ENCODE measurements at regions of chr16 and their contacts with region 1.

Region 1: DNA sequence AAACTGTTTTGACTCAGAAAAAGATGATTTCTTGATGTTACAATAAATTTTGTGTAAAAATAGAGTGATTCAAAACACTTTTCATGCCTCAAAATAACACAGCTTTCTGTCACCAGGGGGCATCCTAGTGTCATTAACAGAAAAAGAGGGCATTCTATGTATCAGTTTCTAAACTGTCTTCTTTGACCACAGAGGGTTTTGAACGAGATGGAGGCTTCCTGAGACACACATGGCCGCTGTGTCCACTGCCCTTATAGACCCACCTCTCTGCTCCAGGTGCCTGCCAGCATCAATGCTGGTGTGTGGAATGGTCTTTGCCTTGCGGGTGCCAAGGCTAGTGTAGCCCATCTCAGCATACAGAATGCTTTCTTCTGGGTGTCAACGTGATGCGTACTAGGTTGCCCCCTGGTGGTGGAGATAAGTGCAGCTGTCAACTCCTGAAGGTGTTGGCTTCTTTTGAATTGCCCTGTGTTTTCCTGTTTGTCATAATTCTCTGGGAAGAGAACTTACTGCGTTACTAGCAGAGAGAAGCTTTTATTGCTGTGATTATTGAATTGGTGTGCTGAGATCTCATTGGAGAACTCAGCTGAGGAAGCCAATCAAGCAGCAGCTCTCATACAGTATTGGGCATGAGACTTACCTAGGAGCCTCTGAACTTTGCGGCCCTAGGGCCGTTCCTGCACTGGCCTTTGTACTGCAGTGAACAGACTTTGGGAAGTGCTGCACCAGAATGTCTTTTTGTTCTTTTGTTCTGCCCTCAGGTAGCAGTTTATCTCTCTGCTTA is 38.6 kb downstream of the USP10 start:
- DNase-seq: peak; percentile 86
- H3K4me3 Mint-ChIP-seq: no peak overlapping the region
- H3K27ac Mint-ChIP-seq: peak overlapping the region; percentile 59
- H3K4me1 Mint-ChIP-seq: peaks cover 41% of the 10 kb centered on the region
- H3K27me3 Mint-ChIP-seq: no peaks in the 10 kb centered on the region
- CTCF ChIP-seq: peak; percentile 75

Region 2: GRCh38 chr16:84511180-84511824 is 227.1 kb before region 1 on chr16:
- CTCF ChIA-PET with region 1: interaction called, 23 read pairs
- POLR2A ChIA-PET with region 1: interaction called, 3 read pairs
- intact Hi-C with region 1: no loop called
- DNase-seq: peak; percentile 86
- H3K4me3 Mint-ChIP-seq: no peak overlapping the region
- H3K27ac Mint-ChIP-seq: no peak overlapping the region
- H3K4me1 Mint-ChIP-seq: no peaks in the 10 kb centered on the region
- H3K27me3 Mint-ChIP-seq: no peaks in the 10 kb centered on the region
- CTCF ChIP-seq: peak; percentile 87

Region 3: DNA sequence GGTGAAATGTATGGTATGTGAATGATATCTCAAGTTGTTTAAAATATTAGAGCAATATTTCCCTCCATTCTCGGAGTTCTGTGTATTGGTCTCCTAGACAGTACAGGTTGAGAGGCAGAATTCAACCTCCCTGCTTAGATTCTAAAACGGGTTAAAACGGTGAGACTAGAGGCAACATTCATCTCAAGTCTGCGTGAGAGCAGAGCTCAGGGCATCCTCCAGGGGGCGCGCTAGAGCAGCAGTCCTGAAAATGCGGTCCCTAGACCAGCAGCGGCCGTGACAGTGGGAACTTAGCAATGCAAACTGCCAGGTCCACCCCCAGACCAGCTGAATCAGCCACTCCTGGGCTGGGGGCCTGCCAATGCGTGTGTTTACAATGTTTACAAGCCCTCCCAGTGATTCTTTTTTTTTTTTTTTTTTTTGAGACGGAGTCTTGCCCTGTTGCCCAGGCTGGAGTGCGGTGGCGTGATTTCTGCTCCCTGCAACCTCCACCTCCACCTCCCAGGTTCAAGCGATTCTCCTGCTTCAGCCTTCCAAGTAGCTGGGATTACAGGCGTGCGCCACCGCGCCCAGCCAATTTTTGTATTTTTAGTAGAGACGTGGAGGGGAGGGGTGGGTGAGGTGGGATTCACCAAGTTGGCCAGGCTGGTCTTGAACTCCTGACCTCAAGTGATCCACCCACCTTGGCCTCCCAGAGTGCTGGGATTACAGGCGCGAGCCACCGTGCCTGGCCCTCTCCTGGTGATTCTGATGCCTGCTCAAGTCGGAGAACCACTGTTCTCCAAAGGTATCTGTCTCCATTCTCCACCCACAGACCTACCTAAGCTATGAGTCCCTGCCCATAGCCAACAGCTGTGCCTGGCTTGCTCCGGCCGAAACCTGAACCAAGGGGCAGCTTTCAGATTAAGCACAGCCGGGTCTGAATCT is 65.9 kb before region 1 on chr16:
- CTCF ChIA-PET with region 1: interaction called, 38 read pairs
- POLR2A ChIA-PET with region 1: interaction called, 5 read pairs
- intact Hi-C with region 1: loop called (anchors 1 kb)
- DNase-seq: peak; percentile 73
- H3K4me3 Mint-ChIP-seq: no peak overlapping the region
- H3K27ac Mint-ChIP-seq: no peak overlapping the region
- H3K4me1 Mint-ChIP-seq: peaks cover 17% of the 10 kb centered on the region
- H3K27me3 Mint-ChIP-seq: no peaks in the 10 kb centered on the region
- CTCF ChIP-seq: peak; percentile 89

Region 4: GRCh38 chr16:84699712-84700445 is 38.6 kb before region 1 on chr16 and contains the start of gene USP10:
- CTCF ChIA-PET with region 1: interaction called, 12 read pairs
- POLR2A ChIA-PET with region 1: interaction called, 66 read pairs
- intact Hi-C with region 1: no loop called
- DNase-seq: peak; percentile 79
- H3K4me3 Mint-ChIP-seq: peak within 1 kb of the TSS; percentile 87
- H3K27ac Mint-ChIP-seq: peak within 1 kb of the TSS; percentile 85
- H3K4me1 Mint-ChIP-seq: peaks cover 10% of the 10 kb centered on the region
- H3K27me3 Mint-ChIP-seq: no peaks in the 10 kb centered on the region
- CTCF ChIP-seq: no peak
- total RNA-seq, gene USP10: 114 and 129 TPM in 2 replicates

Region 5: DNA sequence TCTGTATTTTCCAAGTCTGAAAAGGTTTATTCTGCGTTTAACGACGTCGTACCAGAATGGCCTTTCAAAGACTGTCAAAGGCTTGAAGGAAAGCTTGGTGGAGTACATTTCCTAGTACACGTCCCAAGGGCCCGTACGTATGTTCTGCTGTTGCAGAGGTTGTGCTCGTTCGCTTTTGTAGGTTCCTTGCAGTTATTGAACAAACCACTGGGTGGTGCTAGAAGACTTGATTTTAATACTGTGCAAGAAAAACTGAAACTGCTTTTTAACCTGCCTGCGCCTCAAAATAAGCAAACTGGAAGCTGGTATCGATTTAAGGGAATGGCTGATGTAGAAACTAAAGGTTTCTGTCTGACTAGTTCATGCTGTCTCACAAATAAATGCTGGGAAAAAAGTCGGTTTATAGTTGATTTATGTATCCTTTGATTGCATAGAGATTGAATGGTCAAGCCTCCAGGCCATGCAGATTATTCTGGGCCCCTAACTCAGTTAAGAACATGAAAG is 16.0 kb after region 1 on chr16:
- CTCF ChIA-PET with region 1: interaction called, 128 read pairs
- POLR2A ChIA-PET with region 1: interaction called, 5 read pairs
- intact Hi-C with region 1: no loop called
- DNase-seq: peak; percentile 81
- H3K4me3 Mint-ChIP-seq: no peak overlapping the region
- H3K27ac Mint-ChIP-seq: peak overlapping the region; percentile 57
- H3K4me1 Mint-ChIP-seq: peaks cover 18% of the 10 kb centered on the region
- H3K27me3 Mint-ChIP-seq: no peaks in the 10 kb centered on the region
- CTCF ChIP-seq: peak; percentile 67

Region 6: GRCh38 chr16:84780544-84781376 is 42.3 kb after region 1 on chr16:
- CTCF ChIA-PET with region 1: no interaction called
- POLR2A ChIA-PET with region 1: no interaction called
- intact Hi-C with region 1: no loop called
- DNase-seq: no peak
- H3K4me3 Mint-ChIP-seq: no peak overlapping the region
- H3K27ac Mint-ChIP-seq: no peak overlapping the region
- H3K4me1 Mint-ChIP-seq: peaks cover 6% of the 10 kb centered on the region
- H3K27me3 Mint-ChIP-seq: no peaks in the 10 kb centered on the region
- CTCF ChIP-seq: no peak